ENCODE measurements at regions of chr5 and their contacts with region 1.

Region 1: DNA sequence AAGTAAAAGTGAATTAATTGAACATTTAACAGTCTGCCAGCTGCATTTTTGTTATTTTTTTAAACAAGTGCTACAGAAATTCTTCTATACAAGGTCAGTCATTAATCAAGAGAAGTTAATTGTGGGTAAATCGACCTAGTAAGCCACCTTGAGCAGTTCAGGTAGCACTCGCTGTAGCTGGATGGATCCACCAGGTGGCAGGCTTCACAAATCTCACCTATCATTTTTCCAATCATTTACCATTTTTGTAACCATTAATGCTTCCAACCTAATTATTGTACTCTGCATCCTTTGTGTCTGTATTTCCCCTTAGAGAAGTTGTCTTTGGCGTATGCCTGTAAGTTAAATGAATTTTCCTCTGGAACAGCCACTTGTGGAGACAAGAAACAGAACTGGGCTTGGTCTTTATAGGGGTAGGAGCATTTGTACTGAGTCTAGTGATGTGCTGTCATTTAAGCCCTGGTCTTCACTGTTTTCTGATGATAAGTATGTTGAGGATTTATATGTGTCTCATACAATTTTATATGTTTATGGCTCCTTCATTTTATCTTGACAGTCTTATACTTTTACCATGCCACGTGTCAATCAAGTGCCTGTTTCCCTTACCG is 39.5 kb downstream of the CD180 start:
- DNase-seq: peak; percentile 23 to 77 (median 57)
- ATAC-seq: peak; percentile 59
- H3K4me3 ChIP-seq: no peak overlapping the region
- H3K4me3 Mint-ChIP-seq: no peak overlapping the region
- H3K27ac ChIP-seq: no peak overlapping the region
- H3K27ac Mint-ChIP-seq: peak overlapping the region; percentile 19
- H3K4me1 ChIP-seq: peaks cover 47% of the 10 kb centered on the region
- H3K4me1 Mint-ChIP-seq: peaks cover 53% of the 10 kb centered on the region
- H3K27me3 ChIP-seq: no peaks in the 10 kb centered on the region
- H3K27me3 Mint-ChIP-seq: no peaks in the 10 kb centered on the region
- CTCF ChIP-seq: peak; percentile 85

Region 2: GRCh38 chr5:66171349-66172344 is 985.4 kb before region 1 on chr5:
- CTCF ChIA-PET with region 1: no interaction called
- POLR2A ChIA-PET with region 1: no interaction called
- intact Hi-C with region 1: loop called in 1 of 2 experiments (anchors 10 kb)
- DNase-seq: peak in 8 of 9 experiments; percentile 31 to 84 (median 60)
- ATAC-seq: peak; percentile 83
- H3K4me3 ChIP-seq: no peak overlapping the region
- H3K4me3 Mint-ChIP-seq: no peak overlapping the region
- H3K27ac ChIP-seq: peak overlapping the region; percentile 4 to 16
- H3K27ac Mint-ChIP-seq: peak overlapping the region; percentile 15
- H3K4me1 ChIP-seq: peaks cover 7% of the 10 kb centered on the region
- H3K4me1 Mint-ChIP-seq: peaks cover 18% of the 10 kb centered on the region
- H3K27me3 ChIP-seq: no peaks in the 10 kb centered on the region
- H3K27me3 Mint-ChIP-seq: no peaks in the 10 kb centered on the region
- CTCF ChIP-seq: peak; percentile 66

Region 3: GRCh38 chr5:67003935-67004729 is 152.9 kb before region 1 on chr5:
- CTCF ChIA-PET with region 1: no interaction called
- POLR2A ChIA-PET with region 1: no interaction called
- intact Hi-C with region 1: loop called in 1 of 2 experiments (anchors 5 kb)
- DNase-seq: peak; percentile 70 to 93 (median 87)
- ATAC-seq: peak; percentile 78
- H3K4me3 ChIP-seq: peak overlapping the region; percentile 75 to 85
- H3K4me3 Mint-ChIP-seq: peak overlapping the region; percentile 95
- H3K27ac ChIP-seq: peak overlapping the region; percentile 59 to 75
- H3K27ac Mint-ChIP-seq: peak overlapping the region; percentile 98
- H3K4me1 ChIP-seq: peaks cover 36% of the 10 kb centered on the region
- H3K4me1 Mint-ChIP-seq: peaks cover 52% of the 10 kb centered on the region
- H3K27me3 ChIP-seq: no peaks in the 10 kb centered on the region
- H3K27me3 Mint-ChIP-seq: no peaks in the 10 kb centered on the region
- CTCF ChIP-seq: no peak

Region 4: DNA sequence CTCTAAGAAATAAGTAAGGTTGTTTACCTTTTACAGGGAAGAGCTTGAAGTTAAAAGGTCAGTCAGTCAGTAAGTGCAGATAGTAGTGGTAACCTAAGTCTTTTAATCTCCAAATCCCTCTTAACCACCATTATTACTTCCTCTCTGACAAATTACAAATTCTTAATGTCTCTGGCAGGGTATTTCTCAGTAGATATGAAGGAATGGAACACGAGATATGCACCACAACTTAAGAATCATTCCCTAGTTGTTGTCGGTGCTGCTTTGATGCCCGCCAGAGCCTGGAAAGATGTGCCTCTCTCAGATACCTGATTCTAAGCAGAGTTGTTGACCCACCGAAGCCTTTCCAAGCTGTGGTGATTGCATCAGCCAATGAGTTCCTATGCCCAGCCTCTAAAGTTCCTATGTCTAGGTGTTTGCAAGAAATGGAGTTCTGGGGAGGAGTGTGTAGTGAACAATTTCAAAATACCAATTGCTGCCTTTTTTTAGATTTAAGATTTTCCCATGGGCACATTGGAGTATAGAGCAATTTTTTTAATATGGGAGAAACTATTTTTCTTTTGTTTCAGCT is 38.9 kb before region 1 on chr5:
- CTCF ChIA-PET with region 1: no interaction called
- POLR2A ChIA-PET with region 1: no interaction called
- intact Hi-C with region 1: no loop called
- DNase-seq: no peak
- ATAC-seq: no peak
- H3K4me3 ChIP-seq: no peak overlapping the region
- H3K4me3 Mint-ChIP-seq: no peak overlapping the region
- H3K27ac ChIP-seq: no peak overlapping the region
- H3K27ac Mint-ChIP-seq: no peak overlapping the region
- H3K4me1 ChIP-seq: no peaks in the 10 kb centered on the region
- H3K4me1 Mint-ChIP-seq: no peaks in the 10 kb centered on the region
- H3K27me3 ChIP-seq: no peaks in the 10 kb centered on the region
- H3K27me3 Mint-ChIP-seq: no peaks in the 10 kb centered on the region
- CTCF ChIP-seq: no peak

Region 5: DNA sequence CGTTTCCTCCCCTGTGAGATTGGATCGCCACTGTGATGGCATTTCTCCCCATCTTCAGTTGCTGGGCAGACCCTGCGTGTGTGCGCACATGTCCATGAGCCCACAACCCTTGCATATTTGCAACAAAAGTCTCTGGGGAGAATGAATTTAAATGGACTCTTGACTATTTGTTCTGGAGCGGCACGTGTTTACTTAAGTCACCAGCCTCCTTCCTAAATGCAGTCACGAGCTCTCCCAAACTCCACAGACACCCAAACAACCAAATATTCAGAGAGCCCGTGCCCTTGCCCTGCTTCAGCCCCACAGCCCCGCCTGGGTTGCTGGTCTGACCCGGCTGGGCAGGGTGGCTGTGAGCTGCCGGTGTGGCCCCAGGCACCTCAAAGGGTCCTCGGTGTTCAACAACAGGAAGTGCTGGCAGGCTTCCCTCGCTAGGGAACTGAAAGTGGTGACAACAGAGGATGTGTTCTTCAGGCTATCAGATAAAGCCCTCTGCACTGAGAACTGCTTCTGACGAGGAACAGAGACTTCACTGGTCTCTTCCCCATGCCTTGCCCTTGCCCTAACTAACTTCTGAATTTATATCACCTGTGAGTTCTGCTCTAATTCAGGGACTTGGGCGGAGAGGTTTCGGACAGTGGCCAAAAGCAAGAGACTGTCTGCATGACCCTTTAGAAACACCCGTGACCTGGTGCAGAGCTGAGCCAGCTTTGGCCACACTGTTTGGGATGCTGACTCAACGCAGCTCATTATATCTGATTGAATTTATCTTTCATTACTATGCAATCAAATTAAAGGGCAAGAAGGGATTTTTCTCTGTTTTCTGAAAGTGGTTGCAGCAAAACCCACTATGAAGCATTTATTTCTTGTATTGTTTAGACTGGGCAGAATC is 58.7 kb after region 1 on chr5:
- CTCF ChIA-PET with region 1: interaction called, 537 read pairs
- POLR2A ChIA-PET with region 1: interaction called, 5 read pairs
- intact Hi-C with region 1: no loop called
- DNase-seq: peak; percentile 51 to 88 (median 74)
- ATAC-seq: peak; percentile 97
- H3K4me3 ChIP-seq: peak overlapping the region; percentile 19 to 39
- H3K4me3 Mint-ChIP-seq: peak overlapping the region; percentile 72
- H3K27ac ChIP-seq: peak overlapping the region; percentile 60 to 61
- H3K27ac Mint-ChIP-seq: peak overlapping the region; percentile 99
- H3K4me1 ChIP-seq: peaks cover 45% of the 10 kb centered on the region
- H3K4me1 Mint-ChIP-seq: peaks cover 60% of the 10 kb centered on the region
- H3K27me3 ChIP-seq: no peaks in the 10 kb centered on the region
- H3K27me3 Mint-ChIP-seq: no peaks in the 10 kb centered on the region
- CTCF ChIP-seq: no peak

Region 6: DNA sequence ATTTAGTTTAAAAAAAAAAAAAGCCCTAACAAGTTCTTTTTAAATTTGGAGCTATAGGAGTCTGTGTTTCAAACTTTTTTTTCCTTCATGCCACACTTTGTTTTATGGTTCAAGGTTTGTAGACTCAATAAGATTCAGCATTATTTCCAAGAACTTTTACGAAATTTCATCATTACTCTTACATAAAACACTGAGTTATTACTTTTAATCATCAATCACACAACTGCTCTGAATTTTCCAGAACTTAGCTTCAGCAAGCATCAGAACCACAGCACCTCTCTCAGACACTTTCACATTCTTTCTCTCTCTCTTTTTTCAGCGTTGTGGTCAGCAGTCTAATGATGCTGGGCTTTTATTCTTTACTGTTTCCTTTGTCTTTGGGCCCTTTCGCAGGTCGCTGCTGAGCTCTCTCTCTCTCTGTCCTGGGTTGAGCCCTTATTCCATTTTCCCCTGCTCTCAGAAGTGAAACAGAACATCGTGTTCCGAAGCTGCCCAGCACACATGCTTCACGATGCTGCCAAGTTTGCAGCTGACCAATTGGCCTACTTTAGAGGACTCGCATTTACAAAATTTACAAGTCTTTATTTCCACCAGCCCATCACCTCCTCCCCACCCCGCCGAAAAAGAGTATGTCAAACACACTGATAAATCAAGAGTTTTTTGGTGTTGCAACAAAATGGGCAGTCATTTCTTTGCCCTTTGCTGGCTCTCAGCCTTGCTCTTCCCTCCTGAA is 1013.9 kb after region 1 on chr5:
- CTCF ChIA-PET with region 1: no interaction called
- POLR2A ChIA-PET with region 1: no interaction called
- intact Hi-C with region 1: no loop called
- DNase-seq: no peak
- ATAC-seq: no peak
- H3K4me3 ChIP-seq: no peak overlapping the region
- H3K4me3 Mint-ChIP-seq: no peak overlapping the region
- H3K27ac ChIP-seq: no peak overlapping the region
- H3K27ac Mint-ChIP-seq: no peak overlapping the region
- H3K4me1 ChIP-seq: no peaks in the 10 kb centered on the region
- H3K4me1 Mint-ChIP-seq: no peaks in the 10 kb centered on the region
- H3K27me3 ChIP-seq: no peaks in the 10 kb centered on the region
- H3K27me3 Mint-ChIP-seq: no peaks in the 10 kb centered on the region
- CTCF ChIP-seq: no peak

Region 7: GRCh38 chr5:68272289-68272688 is 1115.2 kb after region 1 on chr5:
- CTCF ChIA-PET with region 1: interaction called, 3 read pairs
- POLR2A ChIA-PET with region 1: no interaction called
- intact Hi-C with region 1: loop called (anchors 5 to 10 kb)
- DNase-seq: peak in 2 of 9 experiments; percentile 38 to 58
- ATAC-seq: no peak
- H3K4me3 ChIP-seq: no peak overlapping the region
- H3K4me3 Mint-ChIP-seq: no peak overlapping the region
- H3K27ac ChIP-seq: no peak overlapping the region
- H3K27ac Mint-ChIP-seq: peak overlapping the region; percentile 52
- H3K4me1 ChIP-seq: peaks cover 64% of the 10 kb centered on the region
- H3K4me1 Mint-ChIP-seq: peaks cover 76% of the 10 kb centered on the region
- H3K27me3 ChIP-seq: no peaks in the 10 kb centered on the region
- H3K27me3 Mint-ChIP-seq: no peaks in the 10 kb centered on the region
- CTCF ChIP-seq: peak; percentile 66

Region 8: DNA sequence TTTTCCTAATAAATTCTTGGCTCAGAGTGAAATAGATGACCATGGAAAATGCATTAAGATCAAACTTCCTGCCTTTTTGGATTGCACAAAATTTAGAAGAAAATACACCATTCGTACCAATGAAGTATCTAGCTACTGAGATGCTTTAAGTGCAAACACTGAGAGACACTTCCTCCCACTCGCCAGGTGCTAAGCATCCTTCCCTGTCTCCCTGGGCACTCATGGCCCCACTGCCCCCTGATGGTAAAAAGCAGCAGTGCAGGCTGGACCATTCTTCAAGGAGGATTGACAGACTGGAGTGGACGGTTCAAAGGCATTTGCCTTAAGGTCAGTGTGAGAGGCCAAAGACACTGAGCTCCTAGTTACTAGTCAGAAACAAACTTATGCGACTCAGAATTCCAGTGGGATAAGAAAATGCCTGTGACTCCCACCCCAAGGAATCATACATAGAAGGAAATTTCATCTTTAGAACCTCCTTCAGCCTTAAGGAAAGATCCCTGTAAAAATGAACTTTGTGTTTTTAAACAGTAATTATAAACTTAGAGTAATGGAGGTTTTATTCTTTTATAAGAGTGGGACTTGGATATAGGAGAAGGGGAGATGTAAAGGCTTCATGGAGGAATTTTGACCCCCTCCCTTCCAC is 1850.8 kb after region 1 on chr5:
- CTCF ChIA-PET with region 1: no interaction called
- POLR2A ChIA-PET with region 1: no interaction called
- intact Hi-C with region 1: loop called in 1 of 2 experiments (anchors 5 kb)
- DNase-seq: peak; percentile 44 to 83 (median 69)
- ATAC-seq: peak; percentile 94
- H3K4me3 ChIP-seq: no peak overlapping the region
- H3K4me3 Mint-ChIP-seq: no peak overlapping the region
- H3K27ac ChIP-seq: no peak overlapping the region
- H3K27ac Mint-ChIP-seq: no peak overlapping the region
- H3K4me1 ChIP-seq: no peaks in the 10 kb centered on the region
- H3K4me1 Mint-ChIP-seq: no peaks in the 10 kb centered on the region
- H3K27me3 ChIP-seq: no peaks in the 10 kb centered on the region
- H3K27me3 Mint-ChIP-seq: peaks cover 4% of the 10 kb centered on the region
- CTCF ChIP-seq: peak; percentile 82

Measured in CD8-positive, alpha-beta T cell (primary cell).